ENCODE measurements at regions of chr13 and their contacts with region 1.

Region 1: DNA sequence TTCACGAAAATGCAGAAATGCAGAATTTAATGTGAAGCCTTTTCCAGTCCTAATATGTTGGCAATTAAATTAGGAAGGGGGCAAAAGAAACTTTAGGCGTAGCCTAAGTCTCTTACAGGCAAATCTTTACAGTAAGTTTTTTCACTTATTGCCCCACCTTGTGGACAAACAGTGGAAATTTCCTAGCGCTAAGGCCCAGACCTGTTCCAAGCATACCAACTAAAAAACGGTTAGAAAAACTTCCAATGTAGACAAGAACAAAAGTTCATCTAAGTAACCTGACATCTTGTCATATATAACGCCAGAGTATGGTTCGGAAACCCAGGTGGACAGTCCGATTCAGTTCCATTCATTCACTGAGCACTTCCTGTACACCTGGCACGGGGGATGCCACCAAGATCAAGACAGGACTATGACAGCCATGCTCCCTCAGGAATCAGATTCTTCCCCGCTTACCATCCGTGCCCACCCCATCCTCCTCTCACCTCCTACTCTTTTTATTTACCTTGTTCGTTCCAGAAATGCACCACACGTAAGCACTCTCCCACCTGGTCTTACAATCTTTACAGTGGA is 4.9 kb downstream of the ZAR1L start:
- DNase-seq: peak; percentile 71
- ATAC-seq: peak; percentile 63
- H3K4me3 ChIP-seq: peak overlapping the region in 3 of 5 experiments; percentile 21 to 31 (median 23)
- H3K4me3 Mint-ChIP-seq: peak overlapping the region; percentile 52
- H3K27ac ChIP-seq: no peak overlapping the region
- H3K27ac Mint-ChIP-seq: no peak overlapping the region
- H3K4me1 ChIP-seq: peaks cover 3 to 15% of the 10 kb centered on the region in 2 donors
- H3K4me1 Mint-ChIP-seq: peaks cover 15% of the 10 kb centered on the region
- H3K27me3 ChIP-seq: no peaks in the 10 kb centered on the region
- H3K27me3 Mint-ChIP-seq: no peaks in the 10 kb centered on the region
- CTCF ChIP-seq: peak; percentile 75

Region 2: GRCh38 chr13:31951215-31951678 is 359.0 kb before region 1 on chr13:
- CTCF ChIA-PET with region 1: no interaction called
- POLR2A ChIA-PET with region 1: interaction called, 6 read pairs
- intact Hi-C with region 1: loop called (anchors 5 kb)
- DNase-seq: peak; percentile 80
- ATAC-seq: peak; percentile 85
- H3K4me3 ChIP-seq: no peak overlapping the region
- H3K4me3 Mint-ChIP-seq: peak overlapping the region; percentile 64
- H3K27ac ChIP-seq: peak overlapping the region; percentile 44 to 75
- H3K27ac Mint-ChIP-seq: peak overlapping the region; percentile 93
- H3K4me1 ChIP-seq: peaks cover 19 to 22% of the 10 kb centered on the region in 2 donors
- H3K4me1 Mint-ChIP-seq: peaks cover 25% of the 10 kb centered on the region
- H3K27me3 ChIP-seq: no peaks in the 10 kb centered on the region
- H3K27me3 Mint-ChIP-seq: no peaks in the 10 kb centered on the region
- CTCF ChIP-seq: no peak

Region 3: DNA sequence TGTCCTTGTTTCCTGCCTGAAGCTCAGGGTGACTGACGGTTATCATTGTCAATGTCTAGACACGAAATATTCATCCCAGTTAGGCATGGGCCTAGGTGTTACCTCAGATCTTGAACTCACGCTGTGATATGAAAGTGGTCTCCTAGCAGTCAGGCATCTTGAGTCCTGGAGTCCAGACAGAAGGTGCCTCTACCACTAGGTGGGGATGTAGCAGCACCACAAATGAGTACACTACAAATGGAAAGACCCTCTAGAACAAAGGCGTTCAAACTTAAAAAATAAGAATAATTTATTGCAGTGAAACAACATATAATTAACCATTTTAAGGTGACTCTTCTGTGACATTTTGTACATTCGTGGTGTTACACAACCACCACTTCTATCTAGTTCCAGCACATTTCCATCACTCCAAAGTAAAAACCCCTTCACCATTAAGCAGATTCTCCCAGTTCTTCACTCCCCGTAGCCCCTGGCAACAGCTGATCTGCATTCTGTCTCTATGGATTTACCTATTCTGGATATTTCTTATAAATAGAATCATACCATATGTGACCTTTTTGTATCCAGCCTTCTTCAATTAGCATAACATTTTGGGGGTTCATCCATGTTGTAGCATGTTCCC is 290.5 kb before region 1 on chr13:
- CTCF ChIA-PET with region 1: interaction called, 3 read pairs
- POLR2A ChIA-PET with region 1: no interaction called
- intact Hi-C with region 1: loop called (anchors 1 kb)
- DNase-seq: peak; percentile 62
- ATAC-seq: peak; percentile 62
- H3K4me3 ChIP-seq: no peak overlapping the region
- H3K4me3 Mint-ChIP-seq: no peak overlapping the region
- H3K27ac ChIP-seq: no peak overlapping the region
- H3K27ac Mint-ChIP-seq: no peak overlapping the region
- H3K4me1 ChIP-seq: no peaks in the 10 kb centered on the region
- H3K4me1 Mint-ChIP-seq: no peaks in the 10 kb centered on the region
- H3K27me3 ChIP-seq: no peaks in the 10 kb centered on the region
- H3K27me3 Mint-ChIP-seq: no peaks in the 10 kb centered on the region
- CTCF ChIP-seq: peak; percentile 69

Region 4: GRCh38 chr13:32060401-32060878 is 249.8 kb before region 1 on chr13:
- CTCF ChIA-PET with region 1: no interaction called
- POLR2A ChIA-PET with region 1: no interaction called
- intact Hi-C with region 1: no loop called
- DNase-seq: no peak
- ATAC-seq: no peak
- H3K4me3 ChIP-seq: no peak overlapping the region
- H3K4me3 Mint-ChIP-seq: no peak overlapping the region
- H3K27ac ChIP-seq: no peak overlapping the region
- H3K27ac Mint-ChIP-seq: no peak overlapping the region
- H3K4me1 ChIP-seq: no peaks in the 10 kb centered on the region
- H3K4me1 Mint-ChIP-seq: no peaks in the 10 kb centered on the region
- H3K27me3 ChIP-seq: no peaks in the 10 kb centered on the region
- H3K27me3 Mint-ChIP-seq: no peaks in the 10 kb centered on the region
- CTCF ChIP-seq: no peak

Region 5: DNA sequence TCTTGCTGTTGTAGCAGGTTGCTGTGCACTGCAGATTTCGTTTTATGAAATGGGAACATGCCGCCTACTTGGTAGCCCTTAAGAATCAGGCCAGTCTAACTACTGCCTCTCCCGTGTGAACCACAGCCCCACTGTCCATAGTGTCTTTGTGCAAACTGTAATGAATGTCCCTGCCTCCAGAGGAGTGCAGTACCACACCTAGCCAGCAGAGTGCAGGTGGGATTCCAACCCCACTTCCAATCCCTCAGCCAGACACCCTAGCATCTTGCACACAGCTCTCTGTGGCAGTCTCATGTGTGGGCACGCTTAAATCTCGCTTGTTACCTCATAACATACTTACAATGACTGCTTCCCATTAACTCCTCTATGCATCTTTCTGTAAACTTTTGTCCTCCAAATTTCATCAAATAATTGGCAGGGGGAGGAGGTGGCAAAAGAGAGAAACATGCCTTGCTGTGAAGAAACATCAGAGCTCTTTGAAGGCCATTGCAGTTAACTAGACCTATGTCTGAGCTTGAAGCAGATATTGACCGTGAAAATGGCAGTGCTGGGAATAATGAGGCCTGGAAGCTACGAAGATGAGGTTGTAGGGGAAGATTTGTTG is 42.3 kb before region 1 on chr13:
- CTCF ChIA-PET with region 1: interaction called, 4 read pairs
- POLR2A ChIA-PET with region 1: no interaction called
- intact Hi-C with region 1: loop called (anchors 5 kb)
- DNase-seq: peak; percentile 55
- ATAC-seq: peak; percentile 81
- H3K4me3 ChIP-seq: no peak overlapping the region
- H3K4me3 Mint-ChIP-seq: no peak overlapping the region
- H3K27ac ChIP-seq: no peak overlapping the region
- H3K27ac Mint-ChIP-seq: no peak overlapping the region
- H3K4me1 ChIP-seq: no peaks in the 10 kb centered on the region
- H3K4me1 Mint-ChIP-seq: no peaks in the 10 kb centered on the region
- H3K27me3 ChIP-seq: no peaks in the 10 kb centered on the region
- H3K27me3 Mint-ChIP-seq: no peaks in the 10 kb centered on the region
- CTCF ChIP-seq: peak; percentile 82